Activated T-helper 1 cell treated with anti-CD3 and anti-CD28 coated beads, Interleukin-12 subunit alpha, Interleukin-12 subunit beta, Interleukin-2, Interleukin-4 antibody, amounts not matched to agents 30 ng/mL and 10 ng/mL and 1 ng/mL, durations not matched to agents 14 hours and 24 hours and 36 hours (primary cell): ENCODE measurements at regions of chrX and their contacts with region 1.

Region 1: GRCh38 chrX:17654116-17654515 is 83.2 kb upstream of the SCML1 start:
- DNase-seq: peak; percentile 36
- H3K4me3 Mint-ChIP-seq: peak overlapping the region; percentile 93
- H3K27ac Mint-ChIP-seq: peak overlapping the region; percentile 90
- H3K4me1 Mint-ChIP-seq: peaks cover 24% of the 10 kb centered on the region
- H3K27me3 Mint-ChIP-seq: peaks cover 4% of the 10 kb centered on the region

Region 2: DNA sequence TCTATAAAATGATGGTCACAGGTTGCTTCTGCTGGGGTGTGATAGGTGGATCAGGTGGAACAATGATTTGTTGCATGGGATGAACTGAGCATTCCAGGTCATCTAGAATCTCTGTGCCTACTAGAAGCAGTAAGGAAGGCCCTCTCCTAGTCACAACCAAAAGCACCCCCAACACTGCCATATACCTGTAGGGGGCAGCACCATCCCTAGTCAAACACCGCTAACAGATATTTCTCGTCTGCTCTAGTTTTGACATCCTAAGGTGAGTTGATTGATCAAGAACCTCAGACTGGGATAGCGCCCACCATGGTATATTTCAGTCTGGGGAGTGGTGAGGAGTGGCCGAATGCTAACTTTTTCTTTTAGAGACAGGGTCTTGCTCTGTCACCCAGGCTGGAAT is 118.9 kb before region 1 on chrX:
- intact Hi-C with region 1: loop called (anchors 1 kb)
- DNase-seq: peak; percentile 6
- H3K4me3 Mint-ChIP-seq: no peak overlapping the region
- H3K27ac Mint-ChIP-seq: no peak overlapping the region
- H3K4me1 Mint-ChIP-seq: peaks cover 10% of the 10 kb centered on the region
- H3K27me3 Mint-ChIP-seq: peaks cover 1% of the 10 kb centered on the region

Region 3: GRCh38 chrX:17590892-17591740 is 63.0 kb before region 1 on chrX:
- intact Hi-C with region 1: loop called (anchors 1 kb)
- DNase-seq: peak; percentile 6
- H3K4me3 Mint-ChIP-seq: no peak overlapping the region
- H3K27ac Mint-ChIP-seq: no peak overlapping the region
- H3K4me1 Mint-ChIP-seq: peaks cover 23% of the 10 kb centered on the region
- H3K27me3 Mint-ChIP-seq: no peaks in the 10 kb centered on the region

Region 4: DNA sequence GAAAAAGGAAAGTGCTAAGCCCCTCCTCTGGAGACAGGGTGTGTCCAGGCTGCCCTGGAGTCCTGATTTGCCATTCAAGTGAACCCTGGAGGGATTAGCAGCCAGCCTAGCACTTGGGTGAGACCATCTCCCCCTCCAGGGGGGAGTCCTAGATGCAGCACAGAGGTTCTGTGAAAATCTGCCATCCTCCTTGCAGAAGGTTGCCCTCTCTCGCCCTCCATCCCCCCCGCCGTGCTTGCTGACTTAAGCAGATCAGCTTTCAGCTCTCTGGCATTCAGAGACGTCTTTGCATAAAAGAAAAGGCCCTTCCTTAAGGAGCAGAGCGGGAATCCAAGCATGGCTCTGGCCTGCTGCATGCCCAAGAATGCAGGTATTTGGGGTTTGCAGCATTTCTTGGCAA is 18.9 kb before region 1 on chrX:
- intact Hi-C with region 1: loop called (anchors 1 kb)
- DNase-seq: no peak
- H3K4me3 Mint-ChIP-seq: no peak overlapping the region
- H3K27ac Mint-ChIP-seq: no peak overlapping the region
- H3K4me1 Mint-ChIP-seq: peaks cover 9% of the 10 kb centered on the region
- H3K27me3 Mint-ChIP-seq: no peaks in the 10 kb centered on the region

Region 5: DNA sequence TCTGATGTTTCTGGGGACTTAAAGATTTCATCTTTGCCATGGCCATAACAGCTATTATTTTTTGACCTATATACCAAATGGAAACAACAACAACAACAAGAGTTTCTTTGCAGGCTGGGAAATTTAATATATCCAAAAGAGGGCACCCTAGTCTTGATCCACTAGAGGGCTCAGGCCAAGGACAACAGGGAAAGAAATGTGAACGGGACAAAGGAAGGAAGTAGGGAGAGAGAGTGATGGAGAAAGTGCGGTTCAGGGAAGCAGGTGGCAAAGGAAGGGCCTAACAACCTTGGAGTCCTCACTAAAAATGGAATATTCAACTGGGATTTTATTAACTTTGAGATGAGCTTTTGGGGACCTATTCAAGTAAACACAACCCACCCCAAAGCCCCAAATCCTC is 15.3 kb after region 1 on chrX:
- intact Hi-C with region 1: loop called (anchors 1 kb)
- DNase-seq: no peak
- H3K4me3 Mint-ChIP-seq: peak overlapping the region; percentile 48
- H3K27ac Mint-ChIP-seq: peak overlapping the region; percentile 72
- H3K4me1 Mint-ChIP-seq: peaks cover 23% of the 10 kb centered on the region
- H3K27me3 Mint-ChIP-seq: peaks cover 1% of the 10 kb centered on the region

Region 6: GRCh38 chrX:17682259-17682658 is 28.1 kb after region 1 on chrX:
- intact Hi-C with region 1: loop called (anchors 1 kb)
- DNase-seq: no peak
- H3K4me3 Mint-ChIP-seq: peak overlapping the region; percentile 30
- H3K27ac Mint-ChIP-seq: peak overlapping the region; percentile 69
- H3K4me1 Mint-ChIP-seq: peaks cover 29% of the 10 kb centered on the region
- H3K27me3 Mint-ChIP-seq: no peaks in the 10 kb centered on the region

Region 7: GRCh38 chrX:17736856-17737706 is 83.0 kb after region 1 on chrX and contains the start of gene SCML1:
- intact Hi-C with region 1: loop called (anchors 1 kb)
- DNase-seq: peak; percentile 75
- H3K4me3 Mint-ChIP-seq: peak within 1 kb of the TSS; percentile 80
- H3K27ac Mint-ChIP-seq: peak within 1 kb of the TSS; percentile 79
- H3K4me1 Mint-ChIP-seq: peaks cover 20% of the 10 kb centered on the region
- H3K27me3 Mint-ChIP-seq: peaks cover 34% of the 10 kb centered on the region
- total RNA-seq, gene SCML1: 1.1 and 1.4 TPM in 2 replicates